ENCODE measurements at regions of chr12 and their contacts with region 1.

Region 1: DNA sequence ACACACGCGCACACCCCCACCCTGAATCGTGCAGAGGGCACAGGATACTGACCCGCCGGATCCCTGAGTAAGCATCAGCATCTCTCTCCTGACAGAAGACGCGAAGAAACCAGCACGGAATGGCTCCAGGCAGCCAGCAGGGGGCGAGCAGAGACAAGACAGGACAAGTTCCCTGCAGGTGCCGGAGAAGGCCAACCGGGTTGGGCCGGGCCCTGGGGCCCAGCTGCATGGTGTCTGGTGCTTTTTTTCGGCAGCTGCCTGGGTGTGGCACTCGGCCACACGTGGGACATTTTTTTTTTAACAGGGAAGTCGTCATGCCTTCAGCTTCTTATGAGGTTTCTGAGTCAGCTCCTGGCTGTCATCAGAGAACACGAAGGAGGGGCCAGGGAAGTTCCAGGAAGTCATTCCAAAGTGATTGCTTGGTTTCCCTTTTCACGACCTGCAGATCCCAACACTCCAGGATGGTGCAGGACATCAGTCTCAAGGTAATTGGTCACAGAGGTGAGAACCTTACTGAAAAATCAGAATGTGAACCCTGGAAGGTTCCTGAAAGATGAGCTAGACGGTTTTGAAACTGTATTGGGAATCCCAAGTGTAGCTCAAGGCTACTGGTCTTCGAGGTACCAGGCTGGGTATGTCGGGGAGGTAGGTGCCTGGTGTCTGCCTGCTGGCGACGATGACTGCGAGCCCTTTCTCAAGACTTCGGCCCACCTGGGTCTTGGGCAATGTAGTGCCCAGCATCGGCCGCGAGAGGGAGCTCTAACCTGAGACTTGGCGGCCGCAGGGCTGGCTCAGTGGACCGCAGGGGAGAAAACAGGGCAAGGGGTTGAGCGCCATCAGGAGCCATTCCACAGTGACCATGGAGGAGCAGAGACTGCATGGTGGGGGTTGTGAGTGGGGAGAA is 190.8 kb upstream of the PRMT8 start:
- DNase-seq: peak; percentile 84
- H3K4me3 Mint-ChIP-seq: peak overlapping the region; percentile 26
- H3K27ac Mint-ChIP-seq: peak overlapping the region; percentile 52
- H3K4me1 Mint-ChIP-seq: peaks cover 10% of the 10 kb centered on the region
- H3K27me3 Mint-ChIP-seq: peaks cover 3% of the 10 kb centered on the region

Region 2: GRCh38 chr12:3107071-3107583 is 193.1 kb before region 1 on chr12:
- CTCF ChIA-PET with region 1: no interaction called
- POLR2A ChIA-PET with region 1: no interaction called
- DNase-seq: no peak
- H3K4me3 Mint-ChIP-seq: no peak overlapping the region
- H3K27ac Mint-ChIP-seq: no peak overlapping the region
- H3K4me1 Mint-ChIP-seq: no peaks in the 10 kb centered on the region
- H3K27me3 Mint-ChIP-seq: peaks cover 4% of the 10 kb centered on the region

Region 3: GRCh38 chr12:3152892-3153291 is 147.3 kb before region 1 on chr12:
- CTCF ChIA-PET with region 1: interaction called, 11 read pairs
- POLR2A ChIA-PET with region 1: no interaction called
- DNase-seq: no peak
- H3K4me3 Mint-ChIP-seq: no peak overlapping the region
- H3K27ac Mint-ChIP-seq: no peak overlapping the region
- H3K4me1 Mint-ChIP-seq: no peaks in the 10 kb centered on the region
- H3K27me3 Mint-ChIP-seq: peaks cover 18% of the 10 kb centered on the region

Region 4: DNA sequence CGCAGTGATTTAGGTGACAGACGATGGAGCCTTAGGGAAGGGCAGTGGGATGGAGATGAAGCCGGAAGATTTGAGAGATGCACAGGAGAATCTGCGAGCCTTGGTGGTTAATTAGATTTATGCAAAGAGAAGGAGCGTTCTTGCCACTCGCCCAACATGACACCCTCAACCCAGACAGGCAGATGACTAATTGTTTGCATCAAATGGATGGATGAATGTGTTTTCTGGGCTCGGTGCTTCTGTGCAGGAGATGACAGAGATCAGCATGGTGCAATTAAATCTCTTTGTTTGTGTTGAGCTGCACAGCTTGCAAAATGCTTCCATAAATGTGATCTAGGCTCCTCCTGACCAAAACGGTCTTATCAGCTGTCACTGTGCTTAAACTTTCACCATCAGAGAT is 11.5 kb before region 1 on chr12:
- CTCF ChIA-PET with region 1: interaction called, 38 read pairs
- POLR2A ChIA-PET with region 1: interaction called, 3 read pairs
- DNase-seq: no peak
- H3K4me3 Mint-ChIP-seq: no peak overlapping the region
- H3K27ac Mint-ChIP-seq: no peak overlapping the region
- H3K4me1 Mint-ChIP-seq: no peaks in the 10 kb centered on the region
- H3K27me3 Mint-ChIP-seq: peaks cover 3% of the 10 kb centered on the region

Region 5: DNA sequence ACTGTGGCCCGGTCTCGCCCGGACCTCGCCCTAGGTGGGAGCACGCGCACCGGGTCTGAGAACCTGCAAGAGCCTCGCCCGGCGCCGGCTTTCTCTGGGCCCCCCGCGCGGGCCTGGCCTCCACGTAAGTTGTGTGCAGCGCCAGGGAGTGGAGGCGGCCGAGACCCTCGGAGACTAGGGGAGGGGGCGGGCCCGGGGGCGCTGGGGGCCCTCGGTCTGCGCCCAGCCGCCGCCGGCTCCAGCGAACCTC is 190.6 kb after region 1 on chr12:
- CTCF ChIA-PET with region 1: no interaction called
- POLR2A ChIA-PET with region 1: no interaction called
- DNase-seq: no peak
- H3K4me3 Mint-ChIP-seq: no peak overlapping the region
- H3K27ac Mint-ChIP-seq: no peak overlapping the region
- H3K4me1 Mint-ChIP-seq: no peaks in the 10 kb centered on the region
- H3K27me3 Mint-ChIP-seq: peaks cover 74% of the 10 kb centered on the region

Region 6: DNA sequence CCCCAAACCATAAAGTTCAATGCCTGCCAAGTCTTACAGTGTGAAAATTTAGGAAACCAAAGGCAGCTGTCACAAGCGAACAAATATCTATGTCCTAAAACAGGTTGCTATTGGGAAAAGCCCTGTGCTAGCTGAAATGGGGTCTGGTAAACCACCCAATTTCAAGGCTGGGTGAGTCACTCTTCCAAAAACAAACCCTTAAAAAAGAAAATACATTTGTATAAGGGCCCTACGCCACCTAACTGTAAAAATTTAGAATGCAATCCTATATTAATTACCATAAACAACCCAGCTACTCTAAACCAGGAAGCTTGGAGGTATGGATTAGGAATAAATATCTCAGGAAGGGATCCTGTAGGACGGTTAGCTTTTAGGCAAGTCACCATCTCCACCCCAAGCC is 222.9 kb after region 1 on chr12:
- CTCF ChIA-PET with region 1: interaction called, 16 read pairs
- POLR2A ChIA-PET with region 1: no interaction called
- DNase-seq: no peak
- H3K4me3 Mint-ChIP-seq: no peak overlapping the region
- H3K27ac Mint-ChIP-seq: no peak overlapping the region
- H3K4me1 Mint-ChIP-seq: no peaks in the 10 kb centered on the region
- H3K27me3 Mint-ChIP-seq: peaks cover 10% of the 10 kb centered on the region

Region 7: DNA sequence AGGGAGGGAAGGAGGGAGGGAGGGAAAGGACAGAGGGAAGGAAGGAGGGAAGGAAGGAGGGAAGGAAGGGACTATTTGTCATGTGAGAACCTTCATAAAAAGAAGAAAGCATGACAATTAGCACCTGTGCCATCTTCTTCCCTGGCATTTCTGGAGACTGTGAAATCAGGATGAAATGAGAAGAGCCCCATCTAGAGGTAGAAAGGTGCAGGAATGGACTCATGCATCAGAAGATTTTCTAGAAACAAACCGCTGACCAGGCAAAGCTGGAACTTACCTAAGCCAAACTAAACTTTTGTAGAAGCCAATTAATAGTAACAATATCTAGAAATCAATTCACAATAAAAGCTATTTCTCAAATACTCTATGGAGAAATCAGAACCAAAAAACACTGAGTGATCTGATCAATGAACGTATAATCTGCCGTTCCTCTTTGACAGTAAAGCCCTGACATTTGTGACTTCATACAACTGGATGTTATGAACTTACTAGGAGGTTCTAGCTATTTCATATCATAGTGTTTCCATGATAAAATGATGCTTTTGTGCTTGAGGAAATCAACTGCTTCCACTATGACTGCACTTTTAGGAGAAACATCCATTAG is 477.1 kb after region 1 on chr12:
- CTCF ChIA-PET with region 1: interaction called, 18 read pairs
- POLR2A ChIA-PET with region 1: interaction called, 4 read pairs
- DNase-seq: no peak
- H3K4me3 Mint-ChIP-seq: no peak overlapping the region
- H3K27ac Mint-ChIP-seq: no peak overlapping the region
- H3K4me1 Mint-ChIP-seq: peaks cover 6% of the 10 kb centered on the region
- H3K27me3 Mint-ChIP-seq: no peaks in the 10 kb centered on the region

Region 8: DNA sequence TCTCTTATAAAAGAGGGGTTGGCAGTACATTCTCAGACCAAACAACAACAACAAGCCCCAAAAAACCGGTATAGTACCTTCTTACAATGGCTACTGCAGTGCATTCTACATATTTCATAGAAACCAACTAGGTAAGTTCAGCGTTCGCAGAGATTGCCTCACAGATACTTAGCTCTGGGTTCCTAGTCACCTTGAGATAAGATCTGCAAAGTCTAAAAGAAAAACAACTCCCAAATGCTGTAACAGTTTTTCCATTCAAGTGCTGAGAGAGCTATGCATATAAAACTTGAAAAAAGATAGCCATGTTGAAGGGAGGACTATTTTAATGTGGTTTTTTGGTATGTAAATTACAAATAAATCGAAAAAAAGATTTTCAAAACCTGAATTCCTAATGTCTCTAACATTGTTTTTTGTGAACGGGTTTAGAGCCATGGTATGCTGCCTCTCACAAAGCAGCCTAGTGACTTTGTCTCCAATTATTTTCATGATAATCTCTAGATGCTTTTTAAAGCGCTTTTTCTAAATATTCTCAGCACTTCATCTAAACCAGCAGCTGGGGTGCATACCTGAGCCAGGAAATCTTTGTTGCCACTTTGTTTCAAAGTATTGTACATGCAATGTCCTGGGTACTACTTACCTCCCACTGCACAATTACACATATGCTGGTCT is 509.3 kb after region 1 on chr12:
- CTCF ChIA-PET with region 1: interaction called, 80 read pairs
- POLR2A ChIA-PET with region 1: no interaction called
- DNase-seq: no peak
- H3K4me3 Mint-ChIP-seq: no peak overlapping the region
- H3K27ac Mint-ChIP-seq: no peak overlapping the region
- H3K4me1 Mint-ChIP-seq: peaks cover 5% of the 10 kb centered on the region
- H3K27me3 Mint-ChIP-seq: no peaks in the 10 kb centered on the region